Posterior vena cava (tissue), 2 donors: ENCODE measurements at regions of chr2 and their contacts with region 1.

Region 1: GRCh38 chr2:47767880-47768609 is 14.9 kb upstream of the MSH6 start:
- DNase-seq: peak; percentile 93

Region 2: GRCh38 chr2:47344890-47345589 is 423.0 kb before region 1 on chr2:
- intact Hi-C with region 1: loop called in 1 of 2 experiments (anchors 10 kb)
- DNase-seq: no peak

Region 3: DNA sequence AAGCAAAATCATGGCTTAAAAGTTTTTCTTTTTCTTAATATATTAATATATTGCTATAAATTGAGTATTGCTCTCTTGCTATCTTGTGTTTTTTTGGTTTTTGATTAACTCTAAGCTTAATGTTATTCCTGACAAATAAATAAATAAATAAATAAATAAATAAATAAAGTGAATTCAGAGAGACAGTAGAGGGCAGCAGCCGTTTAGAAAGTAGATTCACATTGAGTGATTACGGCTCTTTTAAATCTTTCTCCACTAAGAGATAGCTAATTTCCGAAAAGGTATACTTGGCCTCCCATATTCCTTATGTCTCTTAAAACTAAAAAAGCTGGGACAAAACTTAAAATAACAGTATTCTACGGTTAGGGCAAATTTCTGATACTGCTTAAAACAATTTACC is 330.8 kb before region 1 on chr2:
- intact Hi-C with region 1: loop called (anchors 5 kb)
- DNase-seq: no peak

Region 4: DNA sequence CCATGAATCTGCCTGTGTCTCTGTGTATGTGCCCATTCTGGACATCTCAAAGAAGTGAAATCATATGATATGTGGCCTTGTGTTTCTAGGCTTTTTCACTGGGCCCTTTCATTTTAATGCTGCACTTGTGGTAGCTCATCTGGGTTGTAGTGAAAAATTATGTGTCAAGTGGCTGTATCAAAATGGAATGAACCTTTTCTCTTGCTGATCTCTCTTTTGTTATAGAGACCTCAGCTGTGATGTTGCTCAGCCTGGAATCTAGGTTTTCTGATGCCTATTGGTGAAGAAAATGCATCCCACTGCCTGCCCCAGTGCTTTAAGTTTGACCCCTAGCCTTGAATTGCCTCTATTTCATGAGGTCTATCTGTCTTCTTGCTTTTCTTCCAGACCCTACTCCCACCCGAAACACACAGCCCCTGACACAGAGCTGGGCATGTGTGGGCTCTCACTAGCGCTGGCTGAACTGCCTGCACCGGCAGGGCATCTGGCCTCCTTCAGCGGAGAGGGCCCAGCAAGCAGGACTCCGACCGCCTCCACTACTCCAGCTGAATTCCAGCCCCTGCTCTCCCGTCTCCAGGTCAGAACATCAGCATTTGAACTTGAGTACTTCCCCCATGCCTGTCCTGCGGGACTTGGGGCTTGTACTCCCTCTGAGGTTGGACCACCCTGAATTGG is 160.9 kb before region 1 on chr2:
- intact Hi-C with region 1: no loop called
- DNase-seq: peak; percentile 67